ENCODE measurements at regions of chr7 and their contacts with region 1.

Region 1: DNA sequence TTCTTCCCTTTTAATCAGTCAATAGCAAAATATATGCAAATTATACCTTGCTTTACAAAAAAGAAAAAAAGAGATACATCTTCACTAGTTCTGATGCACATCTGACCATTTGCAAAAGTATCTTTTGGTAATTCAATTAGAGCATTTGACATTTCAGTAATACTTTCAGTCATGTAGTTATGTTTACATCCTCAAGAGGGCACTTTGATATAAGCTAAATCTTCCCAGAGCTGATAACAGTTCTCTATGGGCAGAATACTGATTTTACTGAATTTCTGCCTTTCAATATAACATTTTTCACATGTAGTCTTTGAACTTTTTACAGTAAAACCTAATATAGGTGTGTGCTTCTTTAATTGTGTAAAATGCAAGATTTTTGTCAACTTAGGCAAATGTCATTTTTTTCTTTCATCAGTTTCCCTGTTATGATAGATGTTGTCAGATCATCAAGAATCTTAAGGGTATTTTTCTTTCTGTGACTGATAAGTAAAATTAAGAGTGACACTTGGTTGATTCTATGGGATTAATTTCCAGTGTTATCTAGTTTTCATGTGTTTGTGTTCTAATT is 703.5 kb upstream of the SEMA3D start:
- DNase-seq: peak; percentile 66
- H3K4me3 ChIP-seq: no peak overlapping the region
- H3K27ac ChIP-seq: no peak overlapping the region
- H3K4me1 ChIP-seq: no peaks in the 10 kb centered on the region
- CTCF ChIP-seq: peak; percentile 89

Region 2: DNA sequence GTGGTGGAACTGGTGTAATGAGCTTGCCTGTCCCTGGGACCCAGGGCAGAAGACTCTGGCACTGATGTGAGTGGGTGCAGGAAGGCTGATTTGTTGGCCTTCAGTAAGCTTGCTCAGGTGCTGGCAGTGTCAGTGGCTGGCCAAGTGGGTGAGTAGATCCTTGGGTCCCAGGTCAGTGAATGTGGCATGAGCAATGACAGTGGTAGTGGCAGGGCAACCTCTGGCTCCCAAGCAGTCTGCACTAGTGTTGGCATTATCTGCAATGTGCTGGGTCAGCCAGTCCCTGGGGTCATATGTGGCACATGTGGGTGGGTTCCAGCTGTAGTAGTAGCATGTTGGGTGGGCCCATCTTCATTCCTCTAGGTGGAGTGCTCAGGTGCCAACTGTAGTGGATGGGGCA is 112.5 kb after region 1 on chr7:
- CTCF ChIA-PET with region 1: no interaction called
- POLR2A ChIA-PET with region 1: no interaction called
- intact Hi-C with region 1: no loop called
- DNase-seq: no peak
- H3K4me3 ChIP-seq: no peak overlapping the region
- H3K27ac ChIP-seq: no peak overlapping the region
- H3K4me1 ChIP-seq: no peaks in the 10 kb centered on the region
- CTCF ChIP-seq: no peak

Region 3: GRCh38 chr7:86814661-86815379 is 924.5 kb after region 1 on chr7:
- CTCF ChIA-PET with region 1: no interaction called
- POLR2A ChIA-PET with region 1: no interaction called
- intact Hi-C with region 1: loop called (anchors 5 kb)
- DNase-seq: peak; percentile 23
- H3K4me3 ChIP-seq: no peak overlapping the region
- H3K27ac ChIP-seq: no peak overlapping the region
- H3K4me1 ChIP-seq: no peaks in the 10 kb centered on the region
- CTCF ChIP-seq: peak; percentile 73

Region 4: GRCh38 chr7:87216701-87217508 is 1326.6 kb after region 1 on chr7:
- CTCF ChIA-PET with region 1: no interaction called
- POLR2A ChIA-PET with region 1: no interaction called
- intact Hi-C with region 1: no loop called
- DNase-seq: peak; percentile 92
- H3K4me3 ChIP-seq: peak overlapping the region; percentile 82
- H3K27ac ChIP-seq: peak overlapping the region; percentile 98
- H3K4me1 ChIP-seq: peaks cover 68% of the 10 kb centered on the region
- CTCF ChIP-seq: no peak

Measured in OCI-LY7 (cell line).